ENCODE measurements at regions of chr5 and their contacts with region 1.

Region 1: DNA sequence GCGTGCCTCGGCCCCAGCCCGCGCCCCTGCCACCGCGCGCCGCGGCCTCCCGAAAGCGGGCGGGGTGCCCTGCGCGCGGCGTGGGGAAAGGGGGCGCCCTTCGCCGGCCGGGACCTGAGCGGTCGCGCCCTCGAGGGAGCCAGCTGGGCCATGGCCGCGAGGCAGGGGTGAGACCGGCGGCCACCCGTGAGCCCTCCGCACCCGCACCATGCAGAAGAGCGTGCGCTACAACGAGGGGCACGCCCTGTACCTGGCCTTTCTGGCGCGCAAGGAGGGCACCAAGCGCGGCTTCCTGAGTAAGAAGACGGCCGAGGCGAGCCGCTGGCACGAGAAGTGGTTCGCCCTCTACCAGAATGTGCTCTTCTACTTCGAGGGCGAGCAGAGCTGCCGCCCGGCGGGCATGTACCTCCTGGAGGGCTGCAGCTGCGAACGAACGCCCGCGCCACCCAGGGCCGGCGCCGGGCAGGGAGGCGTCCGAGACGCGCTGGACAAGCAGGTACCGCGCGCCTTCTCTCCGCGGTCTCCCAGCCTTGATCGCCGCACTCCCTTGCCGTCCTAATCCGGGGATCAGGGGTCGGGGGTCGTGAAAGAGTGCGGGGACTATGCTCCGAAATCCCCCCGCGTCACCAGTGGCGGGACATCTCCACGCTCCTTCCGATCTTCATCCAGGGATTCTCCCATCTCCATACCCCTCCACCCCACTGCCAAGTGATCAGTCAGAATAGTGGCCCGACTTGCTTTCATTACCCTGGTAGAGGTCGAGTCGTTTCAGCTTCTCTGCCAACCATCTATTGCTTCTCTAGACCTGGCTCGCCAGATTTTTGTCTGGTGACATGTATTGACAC is 590 bp downstream of the RASGRF2 start:
- DNase-seq: peak; percentile 5 to 79 (median 51)
- ATAC-seq: peak; percentile 30
- H3K4me3 ChIP-seq: peak overlapping the region; percentile 61 to 81
- H3K4me3 Mint-ChIP-seq: peak overlapping the region; percentile 95
- H3K27ac ChIP-seq: peak overlapping the region in 1 of 2 experiments; percentile 50
- H3K27ac Mint-ChIP-seq: peak overlapping the region; percentile 95
- H3K4me1 ChIP-seq: peaks cover 53% of the 10 kb centered on the region
- H3K4me1 Mint-ChIP-seq: peaks cover 66% of the 10 kb centered on the region
- H3K27me3 ChIP-seq: peaks cover 0 to 7% of the 10 kb centered on the region in 2 experiments
- H3K27me3 Mint-ChIP-seq: peaks cover 4% of the 10 kb centered on the region
- CTCF ChIP-seq: no peak

Region 2: GRCh38 chr5:80935811-80936385 is 24.9 kb before region 1 on chr5:
- CTCF ChIA-PET with region 1: interaction called, 18 read pairs
- POLR2A ChIA-PET with region 1: no interaction called
- intact Hi-C with region 1: no loop called
- DNase-seq: peak in 2 of 9 experiments; percentile 16 to 31
- ATAC-seq: peak; percentile 29
- H3K4me3 ChIP-seq: no peak overlapping the region
- H3K4me3 Mint-ChIP-seq: no peak overlapping the region
- H3K27ac ChIP-seq: no peak overlapping the region
- H3K27ac Mint-ChIP-seq: no peak overlapping the region
- H3K4me1 ChIP-seq: no peaks in the 10 kb centered on the region
- H3K4me1 Mint-ChIP-seq: peaks cover 7% of the 10 kb centered on the region
- H3K27me3 ChIP-seq: no peaks in the 10 kb centered on the region
- H3K27me3 Mint-ChIP-seq: no peaks in the 10 kb centered on the region
- CTCF ChIP-seq: no peak

Region 3: GRCh38 chr5:81006947-81007636 is 46.3 kb after region 1 on chr5:
- CTCF ChIA-PET with region 1: interaction called, 5 read pairs
- POLR2A ChIA-PET with region 1: interaction called, 9 read pairs
- intact Hi-C with region 1: loop called (anchors 1 to 2 kb)
- DNase-seq: peak in 7 of 9 experiments; percentile 39 to 89 (median 61)
- ATAC-seq: peak; percentile 87
- H3K4me3 ChIP-seq: peak overlapping the region; percentile 41 to 46
- H3K4me3 Mint-ChIP-seq: peak overlapping the region; percentile 83
- H3K27ac ChIP-seq: peak overlapping the region; percentile 46 to 75
- H3K27ac Mint-ChIP-seq: peak overlapping the region; percentile 94
- H3K4me1 ChIP-seq: peaks cover 74% of the 10 kb centered on the region
- H3K4me1 Mint-ChIP-seq: peaks cover 86% of the 10 kb centered on the region
- H3K27me3 ChIP-seq: no peaks in the 10 kb centered on the region
- H3K27me3 Mint-ChIP-seq: no peaks in the 10 kb centered on the region
- CTCF ChIP-seq: no peak

Region 4: DNA sequence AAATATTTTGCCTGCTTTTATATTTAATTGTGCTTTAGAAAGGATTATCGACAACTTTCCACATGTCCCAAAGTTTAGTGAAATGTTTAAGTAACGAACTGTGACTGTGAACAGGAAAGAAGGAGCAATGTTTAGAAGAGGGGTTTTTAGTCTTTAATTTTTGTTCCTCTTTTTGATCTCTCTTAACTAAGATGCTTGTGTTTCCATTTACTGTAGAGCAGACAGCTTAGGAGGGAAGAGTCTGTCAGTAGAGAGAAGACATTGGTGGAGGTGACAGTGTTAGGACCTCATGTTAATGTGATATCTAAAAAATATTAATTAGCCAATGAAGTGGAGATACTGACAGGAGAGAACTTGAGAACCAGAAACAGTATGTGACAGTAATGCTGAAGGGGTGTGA is 91.6 kb after region 1 on chr5:
- CTCF ChIA-PET with region 1: interaction called, 3 read pairs
- POLR2A ChIA-PET with region 1: interaction called, 3 read pairs
- intact Hi-C with region 1: loop called in 1 of 2 experiments (anchors 5 kb)
- DNase-seq: no peak
- ATAC-seq: no peak
- H3K4me3 ChIP-seq: no peak overlapping the region
- H3K4me3 Mint-ChIP-seq: no peak overlapping the region
- H3K27ac ChIP-seq: no peak overlapping the region
- H3K27ac Mint-ChIP-seq: peak overlapping the region; percentile 46
- H3K4me1 ChIP-seq: no peaks in the 10 kb centered on the region
- H3K4me1 Mint-ChIP-seq: peaks cover 37% of the 10 kb centered on the region
- H3K27me3 ChIP-seq: no peaks in the 10 kb centered on the region
- H3K27me3 Mint-ChIP-seq: no peaks in the 10 kb centered on the region
- CTCF ChIP-seq: no peak

Region 5: GRCh38 chr5:81086881-81087281 is 126.1 kb after region 1 on chr5:
- CTCF ChIA-PET with region 1: no interaction called
- POLR2A ChIA-PET with region 1: no interaction called
- intact Hi-C with region 1: loop called in 1 of 2 experiments (anchors 5 kb)
- DNase-seq: no peak
- ATAC-seq: no peak
- H3K4me3 ChIP-seq: no peak overlapping the region
- H3K4me3 Mint-ChIP-seq: no peak overlapping the region
- H3K27ac ChIP-seq: no peak overlapping the region
- H3K27ac Mint-ChIP-seq: no peak overlapping the region
- H3K4me1 ChIP-seq: no peaks in the 10 kb centered on the region
- H3K4me1 Mint-ChIP-seq: peaks cover 3% of the 10 kb centered on the region
- H3K27me3 ChIP-seq: no peaks in the 10 kb centered on the region
- H3K27me3 Mint-ChIP-seq: no peaks in the 10 kb centered on the region
- CTCF ChIP-seq: no peak